CD14-positive monocyte (primary cell): ENCODE measurements at regions of chr9 and their contacts with region 1.

Region 1: DNA sequence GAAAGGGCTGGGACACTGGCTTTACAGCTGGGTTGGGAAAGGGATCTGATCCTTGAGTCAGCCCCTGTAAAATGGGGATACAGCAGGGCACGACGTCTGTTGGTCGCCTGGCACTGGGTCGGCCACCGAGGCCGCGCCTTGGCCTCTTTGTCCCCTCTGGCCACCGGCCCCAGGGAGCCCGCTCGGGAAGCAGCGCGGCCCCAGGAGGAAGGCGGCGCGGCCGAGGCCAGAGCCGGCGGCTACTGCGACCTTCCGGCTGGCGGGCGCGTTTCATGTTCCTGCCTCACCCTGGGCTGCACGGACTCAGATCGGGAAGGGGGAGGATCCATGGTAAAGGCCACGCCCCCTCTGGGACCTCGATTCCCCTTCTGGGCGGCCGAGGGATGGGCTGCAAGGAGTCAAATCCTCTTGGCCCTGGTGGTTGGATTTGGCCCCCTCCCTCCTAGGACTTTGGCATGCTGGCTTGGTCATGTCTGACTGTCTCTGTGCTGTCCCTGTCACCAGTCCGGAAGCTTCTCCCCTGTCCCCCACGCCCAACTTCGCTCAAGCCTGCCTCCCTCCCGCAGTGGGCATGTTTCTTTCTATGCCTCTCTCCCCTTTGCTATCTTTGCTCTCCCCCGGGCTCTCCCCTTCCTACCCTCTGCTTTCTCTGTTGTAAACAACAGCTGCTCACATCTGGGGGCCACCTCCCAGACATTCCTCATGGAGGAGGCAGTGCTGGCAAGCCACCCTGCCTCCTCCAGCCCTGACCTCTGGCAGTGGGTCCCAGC is 25.8 kb downstream of the FPGS start:
- DNase-seq: peak; percentile 66 to 75 (median 69)
- H3K4me3 ChIP-seq: peak overlapping the region in 1 of 3 experiments; percentile 45
- H3K4me3 Mint-ChIP-seq: peak overlapping the region; percentile 62 to 76
- H3K27ac ChIP-seq: peak overlapping the region in 1 of 2 donors; percentile 4
- H3K27ac Mint-ChIP-seq: peak overlapping the region in 6 of 7 donors; percentile 52 to 88 (median 77)
- H3K4me1 ChIP-seq: peaks cover 15 to 19% of the 10 kb centered on the region in 2 donors
- H3K4me1 Mint-ChIP-seq: peaks cover 22% of the 10 kb centered on the region
- H3K27me3 ChIP-seq: no peaks in the 10 kb centered on the region
- H3K27me3 Mint-ChIP-seq: peaks cover 1 to 3% (median 2%) of the 10 kb centered on the region in 3 donors
- CTCF ChIP-seq: no peak

Region 2: GRCh38 chr9:127485995-127486394 is 342.5 kb before region 1 on chr9:
- intact Hi-C with region 1: no loop called
- DNase-seq: no peak
- H3K4me3 ChIP-seq: no peak overlapping the region
- H3K4me3 Mint-ChIP-seq: no peak overlapping the region
- H3K27ac ChIP-seq: no peak overlapping the region
- H3K27ac Mint-ChIP-seq: no peak overlapping the region
- H3K4me1 ChIP-seq: no peaks in the 10 kb centered on the region
- H3K4me1 Mint-ChIP-seq: no peaks in the 10 kb centered on the region
- H3K27me3 ChIP-seq: no peaks in the 10 kb centered on the region
- H3K27me3 Mint-ChIP-seq: peaks cover 0 to 3% (median 1%) of the 10 kb centered on the region in 3 donors
- CTCF ChIP-seq: no peak

Region 3: DNA sequence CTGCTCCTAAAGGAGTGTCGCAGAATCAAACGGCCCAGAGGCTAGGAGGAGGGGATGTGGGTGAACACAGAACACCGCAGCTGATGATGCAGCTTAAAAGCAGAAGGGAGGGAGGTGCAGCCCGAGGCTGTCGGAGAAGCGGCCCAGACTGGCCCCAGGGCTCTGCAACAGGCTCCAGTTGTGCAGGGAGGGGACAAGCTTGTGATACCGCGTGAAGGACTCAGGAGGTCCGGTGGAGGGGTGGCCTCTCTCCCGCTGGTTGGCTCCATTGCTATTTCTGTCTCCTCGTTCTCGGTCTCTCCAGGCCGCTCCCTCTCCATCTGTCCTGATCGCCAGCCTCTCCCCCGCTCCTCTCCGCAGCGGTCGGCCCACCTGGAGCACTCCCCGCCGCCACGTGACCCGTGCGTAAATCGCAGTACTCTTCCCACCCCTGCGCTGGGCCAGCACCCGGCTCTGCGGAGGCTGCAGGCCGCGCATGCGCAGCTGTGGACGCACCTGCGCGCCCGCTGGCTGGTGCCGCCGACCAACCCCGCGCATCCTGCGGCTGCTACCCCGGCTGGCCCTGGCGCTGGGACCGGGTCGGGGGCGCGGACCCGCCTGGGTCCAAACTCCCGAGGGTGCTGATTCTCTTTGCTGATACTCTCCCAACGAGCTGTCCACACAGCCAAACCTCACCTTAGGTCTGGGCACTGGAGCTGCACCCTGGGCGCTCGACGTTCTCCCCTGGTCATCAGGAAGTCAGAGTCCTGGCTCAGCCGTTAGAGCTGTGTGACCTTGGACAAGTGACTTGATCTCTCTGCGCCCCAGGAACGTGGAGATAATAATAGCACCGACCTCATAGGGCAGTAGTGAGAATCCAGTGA is 220.1 kb before region 1 on chr9:
- intact Hi-C with region 1: no loop called
- DNase-seq: peak; percentile 56 to 66 (median 62)
- H3K4me3 ChIP-seq: peak overlapping the region; percentile 11 to 81 (median 42)
- H3K4me3 Mint-ChIP-seq: peak overlapping the region; percentile 75 to 84
- H3K27ac ChIP-seq: peak overlapping the region in 1 of 2 donors; percentile 59
- H3K27ac Mint-ChIP-seq: peak overlapping the region; percentile 58 to 90 (median 80)
- H3K4me1 ChIP-seq: peaks cover 43 to 52% of the 10 kb centered on the region in 2 donors
- H3K4me1 Mint-ChIP-seq: peaks cover 37% of the 10 kb centered on the region
- H3K27me3 ChIP-seq: peaks cover 5 to 16% of the 10 kb centered on the region in 2 donors
- H3K27me3 Mint-ChIP-seq: peaks cover 26 to 34% (median 31%) of the 10 kb centered on the region in 3 donors
- CTCF ChIP-seq: no peak

Region 4: GRCh38 chr9:127796225-127796813 is 32.1 kb before region 1 on chr9:
- intact Hi-C with region 1: no loop called
- DNase-seq: no peak
- H3K4me3 ChIP-seq: no peak overlapping the region
- H3K4me3 Mint-ChIP-seq: peak overlapping the region in 1 of 2 donors; percentile 58
- H3K27ac ChIP-seq: no peak overlapping the region
- H3K27ac Mint-ChIP-seq: peak overlapping the region in 3 of 7 donors; percentile 8 to 84 (median 82)
- H3K4me1 ChIP-seq: peaks cover 16 to 18% of the 10 kb centered on the region in 2 donors
- H3K4me1 Mint-ChIP-seq: peaks cover 25% of the 10 kb centered on the region
- H3K27me3 ChIP-seq: no peaks in the 10 kb centered on the region
- H3K27me3 Mint-ChIP-seq: peaks cover 14 to 20% (median 18%) of the 10 kb centered on the region in 3 donors
- CTCF ChIP-seq: no peak

Region 5: DNA sequence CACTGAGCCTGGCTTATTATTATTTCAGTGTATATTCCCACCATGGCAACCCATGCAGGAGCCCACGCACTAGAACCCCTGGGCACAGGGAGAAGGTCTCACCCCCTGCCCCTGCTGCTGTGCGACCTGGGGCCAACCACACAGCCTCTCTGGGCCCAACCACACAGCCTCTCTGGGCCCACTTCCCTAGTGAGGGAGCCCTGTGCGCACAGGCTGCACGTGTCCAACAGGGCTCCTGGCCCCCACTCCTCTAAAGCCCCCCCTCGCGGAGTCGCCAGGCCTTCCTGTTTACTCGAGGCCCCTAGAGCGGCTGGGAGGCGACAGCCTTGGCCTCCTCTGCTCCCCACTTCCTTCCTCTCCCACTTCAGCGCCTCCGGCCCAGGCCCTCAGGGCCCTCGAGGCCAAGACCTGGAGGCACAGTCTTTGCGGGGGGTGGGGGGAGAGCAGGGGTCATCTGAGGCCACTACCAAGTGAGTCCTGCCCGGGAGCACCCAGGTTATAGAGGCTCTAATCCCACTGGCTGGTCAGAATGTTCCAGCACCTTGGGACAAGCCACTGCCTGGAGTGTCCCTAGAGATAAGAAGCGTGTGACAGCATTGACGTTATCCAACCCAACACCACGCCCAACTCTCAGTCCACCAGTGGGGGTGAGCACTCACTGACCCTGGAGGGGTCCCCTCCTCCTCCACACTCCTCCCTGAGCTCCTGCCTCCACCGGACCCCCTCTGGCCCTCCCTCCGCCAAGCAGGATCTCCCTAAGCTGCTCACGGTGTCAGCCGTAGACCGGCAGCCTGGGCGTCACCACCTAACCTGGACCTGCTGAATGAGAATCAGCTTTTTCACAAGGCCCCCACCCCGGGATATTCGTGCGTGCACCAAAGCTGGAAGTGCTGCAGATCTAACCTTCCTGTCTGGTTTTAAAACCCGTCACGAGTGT is 33.9 kb after region 1 on chr9:
- intact Hi-C with region 1: loop called in 1 of 2 experiments (anchors 5 kb)
- DNase-seq: peak; percentile 89 to 95 (median 93)
- H3K4me3 ChIP-seq: peak overlapping the region in 1 of 3 experiments; percentile 16
- H3K4me3 Mint-ChIP-seq: peak overlapping the region in 1 of 2 donors; percentile 34
- H3K27ac ChIP-seq: peak overlapping the region; percentile 90 to 92
- H3K27ac Mint-ChIP-seq: peak overlapping the region; percentile 94 to 98 (median 98)
- H3K4me1 ChIP-seq: peaks cover 57 to 63% of the 10 kb centered on the region in 2 donors
- H3K4me1 Mint-ChIP-seq: peaks cover 62% of the 10 kb centered on the region
- H3K27me3 ChIP-seq: no peaks in the 10 kb centered on the region
- H3K27me3 Mint-ChIP-seq: peaks cover 0 to 7% (median 1%) of the 10 kb centered on the region in 3 donors
- CTCF ChIP-seq: no peak

Region 6: GRCh38 chr9:127968717-127969383 is 140.4 kb after region 1 on chr9:
- intact Hi-C with region 1: no loop called
- DNase-seq: no peak
- H3K4me3 ChIP-seq: no peak overlapping the region
- H3K4me3 Mint-ChIP-seq: no peak overlapping the region
- H3K27ac ChIP-seq: no peak overlapping the region
- H3K27ac Mint-ChIP-seq: peak overlapping the region in 1 of 7 donors; percentile 78
- H3K4me1 ChIP-seq: peaks cover 21 to 40% of the 10 kb centered on the region in 2 donors
- H3K4me1 Mint-ChIP-seq: peaks cover 47% of the 10 kb centered on the region
- H3K27me3 ChIP-seq: no peaks in the 10 kb centered on the region
- H3K27me3 Mint-ChIP-seq: peaks cover 2 to 8% (median 4%) of the 10 kb centered on the region in 3 donors
- CTCF ChIP-seq: no peak